Cardiac septum (tissue), 1 donor: ENCODE measurements at regions of chr1 and their contacts with region 1.

Region 1: GRCh38 chr1:158124999-158125398 is 55.7 kb upstream of the CD1D start:
- DNase-seq: peak; percentile 85

Region 2: GRCh38 chr1:157575744-157576143 is 549.3 kb before region 1 on chr1:
- intact Hi-C with region 1: loop called (anchors 5 kb)
- DNase-seq: no peak

Region 3: GRCh38 chr1:157963713-157964112 is 161.3 kb before region 1 on chr1:
- intact Hi-C with region 1: loop called (anchors 1 kb)
- DNase-seq: no peak

Region 4: DNA sequence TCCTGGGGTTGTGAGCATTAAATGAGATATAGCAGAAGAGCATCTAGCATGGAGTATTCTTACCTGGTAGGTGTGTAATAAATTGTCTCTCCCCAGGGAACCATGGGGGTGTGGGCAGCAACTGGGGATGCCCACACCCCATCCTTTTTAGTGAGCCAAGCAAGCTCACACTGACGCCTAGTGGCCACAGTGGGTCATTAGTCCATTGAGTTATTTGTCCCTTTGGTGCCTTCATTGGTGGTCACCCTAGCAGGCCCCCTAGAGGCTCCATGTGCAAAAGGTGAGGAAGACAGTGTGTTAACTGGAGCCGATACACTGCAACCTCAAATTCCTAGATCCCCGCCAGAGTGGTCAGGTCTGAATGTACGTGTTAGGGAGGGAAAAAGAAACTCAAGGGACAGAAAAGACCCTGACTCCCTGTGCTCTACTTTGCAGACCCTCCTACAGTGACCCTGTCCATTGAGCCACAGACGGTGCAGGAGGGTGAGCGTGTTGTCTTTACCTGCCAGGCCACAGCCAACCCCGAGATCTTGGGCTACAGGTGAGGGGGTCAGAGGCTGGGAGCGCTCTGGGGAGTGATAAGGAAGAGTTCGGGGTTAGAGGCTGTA is 37.6 kb before region 1 on chr1:
- intact Hi-C with region 1: loop called (anchors 5 kb)
- DNase-seq: no peak

Region 5: GRCh38 chr1:158101927-158102326 is 23.1 kb before region 1 on chr1:
- intact Hi-C with region 1: no loop called
- DNase-seq: no peak

Region 6: DNA sequence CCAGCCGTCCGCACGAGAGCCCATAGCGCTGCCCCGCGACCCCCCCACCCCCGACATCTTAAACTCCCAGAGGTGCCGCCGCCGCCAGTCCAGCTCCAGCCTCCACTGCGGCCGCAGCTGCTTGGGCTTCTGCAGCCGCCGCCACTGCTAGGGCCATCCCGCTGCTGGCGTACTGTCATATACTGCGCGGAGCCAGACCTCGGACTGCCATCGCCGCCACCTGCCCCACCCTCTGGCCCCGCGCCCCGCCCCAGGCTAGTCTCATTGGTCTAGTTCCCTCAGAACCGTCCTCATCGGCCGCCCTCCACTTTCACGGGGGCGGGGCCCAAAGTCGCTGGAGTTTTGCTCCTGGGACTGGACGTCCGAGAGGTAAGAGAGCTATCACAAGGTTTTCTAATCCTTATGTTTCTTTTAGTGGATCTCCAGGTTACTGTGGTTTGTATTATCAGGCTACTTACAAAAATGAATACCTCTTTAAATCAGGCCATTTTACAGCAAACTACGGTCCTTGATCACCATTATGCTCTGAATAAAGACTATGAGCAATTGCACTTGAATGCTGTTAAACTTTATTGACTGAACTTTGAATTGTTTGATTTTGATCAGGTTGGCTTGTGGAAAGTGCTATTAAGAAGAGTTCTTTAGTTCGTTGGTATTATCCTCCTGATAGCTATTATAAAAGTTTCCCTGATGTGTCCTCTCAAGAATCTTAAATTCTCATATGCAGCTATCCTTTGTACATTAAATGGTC is 52.9 kb after region 1 on chr1:
- intact Hi-C with region 1: no loop called
- DNase-seq: peak; percentile 97